Right ventricle myocardium inferior (tissue), 1 donor: ENCODE measurements at regions of chr13 and their contacts with region 1.

Region 1: GRCh38 chr13:48126944-48127830 is 32.3 kb upstream of the MED4 start:
- DNase-seq: peak; percentile 75
- ATAC-seq: peak; percentile 91

Region 2: GRCh38 chr13:48086272-48086671 is 40.9 kb before region 1 on chr13:
- intact Hi-C with region 1: no loop called
- DNase-seq: no peak
- ATAC-seq: no peak

Region 3: DNA sequence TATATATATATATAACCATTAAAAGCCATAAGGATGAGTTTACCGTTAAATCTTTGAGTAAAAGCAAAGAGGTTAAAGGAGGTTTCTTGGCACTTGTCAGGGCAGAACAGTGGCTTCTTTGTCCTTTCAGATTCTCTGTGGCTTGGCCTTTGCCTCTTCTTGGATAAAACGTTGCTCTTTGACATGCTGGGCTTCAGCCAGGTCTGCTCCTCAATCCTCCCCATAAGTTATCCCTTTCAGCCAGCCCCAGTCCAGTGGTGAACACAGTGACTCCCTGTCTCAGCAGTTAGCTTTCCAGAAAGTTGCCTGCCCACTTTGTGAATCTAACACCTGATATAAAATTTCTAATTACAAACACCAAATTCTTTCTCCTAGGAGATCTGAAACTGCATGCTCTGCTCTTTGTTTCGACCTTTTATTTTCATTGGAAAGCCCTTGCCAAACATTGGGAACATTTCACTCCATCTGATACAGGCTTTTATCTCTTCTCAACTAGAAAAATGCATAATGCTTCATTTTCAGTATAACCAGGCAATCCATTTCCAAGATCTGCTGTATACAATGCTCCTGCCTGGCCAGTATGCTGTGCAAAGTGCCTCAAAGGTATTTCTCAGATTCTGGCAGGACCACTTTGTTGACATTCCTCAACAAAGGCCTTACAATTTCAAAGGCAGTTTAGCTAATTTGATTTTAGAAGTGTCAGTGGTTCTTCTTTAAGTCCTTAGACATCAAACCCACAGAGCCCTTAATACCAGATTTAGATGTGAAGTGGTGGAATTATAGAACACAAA is 16.1 kb before region 1 on chr13:
- intact Hi-C with region 1: loop called (anchors 2 kb)
- DNase-seq: no peak
- ATAC-seq: peak; percentile 93

Region 4: DNA sequence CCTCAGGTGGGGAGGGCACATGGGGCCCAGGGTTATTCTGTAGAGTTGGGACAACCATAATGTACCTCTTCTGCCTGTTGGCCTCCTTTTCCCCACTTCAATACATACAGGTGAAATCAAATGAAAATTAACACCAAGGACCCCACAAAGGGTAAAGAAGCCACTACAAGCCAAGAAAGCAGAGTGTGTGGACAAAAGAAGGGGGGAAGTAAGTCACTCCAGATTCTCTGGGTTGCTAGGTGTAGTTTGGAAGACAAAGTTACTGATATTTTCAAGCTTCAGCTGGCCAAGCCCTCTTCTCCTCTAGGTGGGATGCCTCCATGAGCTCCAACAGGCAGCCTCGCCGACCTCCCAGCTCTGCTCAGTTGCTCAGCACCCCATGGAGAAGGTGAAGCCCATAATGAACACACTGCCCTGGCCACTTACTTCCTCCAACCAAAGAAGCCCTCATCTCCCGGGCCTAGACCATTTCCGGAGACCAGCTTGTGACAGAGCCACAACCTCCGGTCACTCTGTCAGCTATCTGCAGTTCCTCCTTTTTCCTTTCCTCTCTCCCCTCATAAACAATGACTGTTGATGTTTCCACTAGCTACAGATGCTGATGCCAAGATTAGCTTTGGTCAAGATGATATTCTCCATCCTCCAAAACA is 34.5 kb after region 1 on chr13:
- intact Hi-C with region 1: no loop called
- DNase-seq: peak; percentile 80
- ATAC-seq: peak; percentile 79

Region 5: DNA sequence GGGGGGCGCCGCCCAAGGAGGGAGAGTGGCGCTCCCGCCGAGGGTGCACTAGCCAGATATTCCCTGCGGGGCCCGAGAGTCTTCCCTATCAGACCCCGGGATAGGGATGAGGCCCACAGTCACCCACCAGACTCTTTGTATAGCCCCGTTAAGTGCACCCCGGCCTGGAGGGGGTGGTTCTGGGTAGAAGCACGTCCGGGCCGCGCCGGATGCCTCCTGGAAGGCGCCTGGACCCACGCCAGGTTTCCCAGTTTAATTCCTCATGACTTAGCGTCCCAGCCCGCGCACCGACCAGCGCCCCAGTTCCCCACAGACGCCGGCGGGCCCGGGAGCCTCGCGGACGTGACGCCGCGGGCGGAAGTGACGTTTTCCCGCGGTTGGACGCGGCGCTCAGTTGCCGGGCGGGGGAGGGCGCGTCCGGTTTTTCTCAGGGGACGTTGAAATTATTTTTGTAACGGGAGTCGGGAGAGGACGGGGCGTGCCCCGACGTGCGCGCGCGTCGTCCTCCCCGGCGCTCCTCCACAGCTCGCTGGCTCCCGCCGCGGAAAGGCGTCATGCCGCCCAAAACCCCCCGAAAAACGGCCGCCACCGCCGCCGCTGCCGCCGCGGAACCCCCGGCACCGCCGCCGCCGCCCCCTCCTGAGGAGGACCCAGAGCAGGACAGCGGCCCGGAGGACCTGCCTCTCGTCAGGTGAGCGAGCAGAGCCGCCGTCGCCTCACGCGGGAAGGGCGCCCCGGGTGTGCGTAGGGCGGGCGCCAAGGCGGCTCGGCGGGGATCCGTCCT is 176.4 kb after region 1 on chr13 and contains the start of gene RB1:
- intact Hi-C with region 1: loop called (anchors 1 kb)
- DNase-seq: peak; percentile 97
- ATAC-seq: peak; percentile 95
- total RNA-seq, gene RB1: 27.7 TPM